AG04450 (cell line): ENCODE measurements at regions of chr12 and their contacts with region 1.

Region 1: DNA sequence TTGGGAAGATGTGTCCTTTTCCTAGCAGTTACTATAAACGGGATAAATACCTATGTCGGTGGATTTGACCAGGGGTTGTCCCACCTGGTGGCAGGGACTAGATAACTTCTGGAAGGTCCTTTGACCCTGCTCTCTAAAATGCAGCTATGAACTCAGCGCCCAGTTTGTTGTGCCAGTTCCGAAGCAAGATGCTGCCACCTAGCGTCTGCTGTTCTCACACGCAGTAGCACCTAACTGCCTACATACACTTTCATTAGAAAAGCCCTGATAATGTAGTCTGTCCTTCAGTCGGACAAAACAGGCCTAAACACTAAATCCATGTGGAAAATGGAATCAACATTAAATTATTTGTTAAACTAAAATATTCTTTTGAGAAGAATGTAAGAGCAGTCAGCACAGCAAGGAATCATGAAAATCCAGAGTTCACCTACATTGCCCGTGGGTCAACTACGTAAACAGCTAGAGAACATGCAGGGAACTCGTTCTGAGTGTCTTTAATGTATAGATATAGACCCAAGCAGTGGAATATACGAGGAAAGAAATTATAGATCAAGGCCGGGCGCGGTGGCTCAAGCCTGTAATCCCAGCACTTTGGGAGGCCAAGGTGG is 51.1 kb upstream of the CRACR2A start:
- DNase-seq: peak; percentile 29
- H3K4me3 ChIP-seq: no peak overlapping the region
- H3K27ac ChIP-seq: no peak overlapping the region
- H3K27me3 ChIP-seq: no peaks in the 10 kb centered on the region
- CTCF ChIP-seq: peak; percentile 93

Region 2: GRCh38 chr12:3777206-3777809 is 26.7 kb before region 1 on chr12:
- CTCF ChIA-PET with region 1: interaction called, 14 read pairs
- POLR2A ChIA-PET with region 1: no interaction called
- DNase-seq: peak; percentile 10
- H3K4me3 ChIP-seq: no peak overlapping the region
- H3K27ac ChIP-seq: no peak overlapping the region
- H3K27me3 ChIP-seq: peaks cover 5% of the 10 kb centered on the region
- CTCF ChIP-seq: peak; percentile 87

Region 3: GRCh38 chr12:3820122-3820521 is 16.2 kb after region 1 on chr12:
- CTCF ChIA-PET with region 1: interaction called, 22 read pairs
- POLR2A ChIA-PET with region 1: interaction called, 4 read pairs
- DNase-seq: no peak
- H3K4me3 ChIP-seq: no peak overlapping the region
- H3K27ac ChIP-seq: no peak overlapping the region
- H3K27me3 ChIP-seq: no peaks in the 10 kb centered on the region
- CTCF ChIP-seq: no peak

Region 4: GRCh38 chr12:3828888-3829287 is 24.9 kb after region 1 on chr12:
- CTCF ChIA-PET with region 1: interaction called, 16 read pairs
- POLR2A ChIA-PET with region 1: no interaction called
- DNase-seq: no peak
- H3K4me3 ChIP-seq: no peak overlapping the region
- H3K27ac ChIP-seq: no peak overlapping the region
- H3K27me3 ChIP-seq: no peaks in the 10 kb centered on the region
- CTCF ChIP-seq: no peak